ENCODE measurements at regions of chr17 and their contacts with region 1.

Region 1: GRCh38 chr17:34584805-34585416 is 5.5 kb downstream of the TMEM132E start:
- DNase-seq: peak in 1 of 2 donors; percentile 43
- ATAC-seq: peak in 1 of 3 donors; percentile 50
- H3K4me3 ChIP-seq: no peak overlapping the region
- H3K4me3 Mint-ChIP-seq: no peak overlapping the region
- H3K27ac ChIP-seq: no peak overlapping the region
- H3K27ac Mint-ChIP-seq: no peak overlapping the region
- H3K4me1 ChIP-seq: peaks cover 16% of the 10 kb centered on the region
- H3K4me1 Mint-ChIP-seq: no peaks in the 10 kb centered on the region
- H3K27me3 ChIP-seq: peaks cover 27% of the 10 kb centered on the region
- H3K27me3 Mint-ChIP-seq: peaks cover 56 to 61% of the 10 kb centered on the region in 2 donors
- CTCF ChIP-seq: no peak

Region 2: GRCh38 chr17:34527908-34528470 is 56.9 kb before region 1 on chr17:
- intact Hi-C with region 1: loop called (anchors 10 kb)
- DNase-seq: no peak
- ATAC-seq: no peak
- H3K4me3 ChIP-seq: no peak overlapping the region
- H3K4me3 Mint-ChIP-seq: no peak overlapping the region
- H3K27ac ChIP-seq: no peak overlapping the region
- H3K27ac Mint-ChIP-seq: no peak overlapping the region
- H3K4me1 ChIP-seq: no peaks in the 10 kb centered on the region
- H3K4me1 Mint-ChIP-seq: no peaks in the 10 kb centered on the region
- H3K27me3 ChIP-seq: peaks cover 2% of the 10 kb centered on the region
- H3K27me3 Mint-ChIP-seq: peaks cover 26 to 53% of the 10 kb centered on the region in 2 donors
- CTCF ChIP-seq: no peak

Measured in natural killer cell (primary cell).